Posterior cingulate gyrus (tissue), 11 donors: ENCODE measurements at regions of chr1 and their contacts with region 1.

Region 1: DNA sequence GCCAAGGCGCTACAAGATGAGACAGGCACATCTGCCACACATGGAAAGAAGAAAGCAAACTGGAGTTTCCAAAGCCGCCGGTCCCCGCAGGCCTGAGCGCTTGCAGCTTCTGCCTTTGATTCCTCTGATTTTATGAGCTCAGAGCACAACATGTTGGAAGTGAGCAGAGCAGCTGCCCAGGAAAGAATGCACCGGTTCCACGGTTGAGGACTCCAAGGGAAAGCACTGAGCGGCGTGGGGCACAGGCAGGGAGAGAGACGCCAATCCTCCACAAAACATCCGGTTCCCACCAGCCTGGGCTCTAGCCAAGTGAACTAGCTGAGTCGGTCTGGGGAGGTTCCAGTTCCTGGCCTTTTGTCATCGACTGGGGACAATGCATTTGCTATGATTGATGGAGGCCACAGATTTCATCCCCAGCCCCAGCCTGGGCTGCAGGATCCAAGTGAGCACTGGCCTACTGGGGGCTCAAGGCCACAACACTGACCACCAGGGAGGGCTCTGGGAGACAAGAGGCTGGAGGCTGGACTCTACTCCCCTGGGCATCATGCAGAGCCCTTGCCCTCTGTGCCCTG is 253.1 kb upstream of the IRF2BP2 start:
- DNase-seq: peak; percentile 54 to 94 (median 76)

Region 2: DNA sequence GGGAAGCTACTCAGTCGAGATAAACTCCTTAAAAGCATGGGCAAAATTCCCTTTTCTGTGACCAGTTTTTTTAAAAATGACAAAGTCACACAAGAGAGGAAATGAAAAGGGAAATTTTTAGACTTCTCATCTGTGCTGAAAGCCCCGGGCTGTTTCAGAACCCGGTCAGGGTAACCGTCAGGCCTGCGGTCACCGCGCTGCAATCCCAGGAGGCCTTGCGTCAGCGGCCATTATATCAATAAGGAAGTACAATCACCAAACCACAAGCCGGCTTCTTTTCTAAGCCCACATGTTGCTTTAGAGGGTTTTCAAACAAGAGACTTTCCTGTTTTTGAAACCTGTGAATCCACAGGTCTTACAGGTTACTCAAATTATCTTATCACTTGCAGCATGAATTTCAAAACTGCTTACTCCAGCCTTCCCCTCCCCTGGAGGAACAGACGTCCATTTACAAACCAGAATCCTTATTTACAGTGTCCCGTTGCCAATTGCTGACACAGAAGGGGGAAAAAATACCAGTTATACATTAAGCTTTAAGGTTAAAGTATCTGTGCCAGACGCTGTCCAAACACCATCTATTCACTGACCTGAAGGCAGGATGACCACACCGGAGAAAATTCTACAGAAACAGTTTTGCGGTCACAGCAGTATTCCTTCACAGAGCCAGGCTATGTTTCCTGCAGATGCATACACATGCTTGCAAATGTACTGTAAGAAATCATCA is 100.3 kb after region 1 on chr1:
- intact Hi-C with region 1: loop called (anchors 10 kb)
- DNase-seq: no peak